Activated T-helper 1 cell treated with anti-CD3 and anti-CD28 coated beads, Interleukin-12 subunit alpha, Interleukin-12 subunit beta, Interleukin-2, Interleukin-4 antibody, amounts not matched to agents 30 ng/mL and 10 ng/mL and 1 ng/mL, durations not matched to agents 14 hours and 24 hours and 36 hours (primary cell): ENCODE measurements at regions of chr17 and their contacts with region 1.

Region 1: GRCh38 chr17:38536661-38537060 is 69.1 kb downstream of the SRCIN1 start:
- DNase-seq: no peak
- H3K4me3 Mint-ChIP-seq: no peak overlapping the region
- H3K27ac Mint-ChIP-seq: no peak overlapping the region
- H3K4me1 Mint-ChIP-seq: no peaks in the 10 kb centered on the region
- H3K27me3 Mint-ChIP-seq: peaks cover 18% of the 10 kb centered on the region

Region 2: DNA sequence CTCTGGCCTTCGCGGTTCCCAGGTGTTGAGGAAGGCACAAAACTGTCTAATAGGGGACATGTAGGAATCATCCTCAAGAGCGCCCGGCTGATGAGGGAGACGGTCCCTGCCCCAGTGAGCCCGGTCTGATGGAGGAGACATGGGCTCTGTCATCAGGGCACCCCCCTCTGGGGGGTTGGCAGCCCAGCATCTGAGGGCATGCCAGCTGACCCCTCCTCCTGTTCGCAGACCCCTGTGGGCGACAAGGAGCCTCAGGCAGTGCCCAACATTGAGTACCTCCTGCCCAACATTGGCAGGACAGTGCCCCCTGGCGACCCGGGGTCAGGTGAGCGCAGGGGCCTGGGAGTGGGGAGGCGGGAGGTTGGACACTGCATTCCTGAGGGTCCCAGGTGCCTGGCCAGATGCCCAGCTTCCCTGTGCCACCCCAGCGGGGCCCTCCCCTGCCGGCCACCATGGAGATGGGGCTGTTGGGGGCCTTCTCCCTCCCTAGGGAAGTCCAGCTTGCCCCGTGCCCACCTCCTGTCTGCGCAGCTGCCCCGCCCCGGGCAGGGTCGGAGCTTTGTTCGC is 38.4 kb before region 1 on chr17:
- intact Hi-C with region 1: loop called (anchors 2 kb)
- DNase-seq: no peak
- H3K4me3 Mint-ChIP-seq: no peak overlapping the region
- H3K27ac Mint-ChIP-seq: no peak overlapping the region
- H3K4me1 Mint-ChIP-seq: no peaks in the 10 kb centered on the region
- H3K27me3 Mint-ChIP-seq: peaks cover 3% of the 10 kb centered on the region

Region 3: GRCh38 chr17:38559051-38559879 is 22.6 kb after region 1 on chr17:
- intact Hi-C with region 1: no loop called
- DNase-seq: peak; percentile 82
- H3K4me3 Mint-ChIP-seq: peak overlapping the region; percentile 95
- H3K27ac Mint-ChIP-seq: peak overlapping the region; percentile 69
- H3K4me1 Mint-ChIP-seq: peaks cover 27% of the 10 kb centered on the region
- H3K27me3 Mint-ChIP-seq: peaks cover 54% of the 10 kb centered on the region